ENCODE measurements at regions of chr12 and their contacts with region 1.

Region 1: DNA sequence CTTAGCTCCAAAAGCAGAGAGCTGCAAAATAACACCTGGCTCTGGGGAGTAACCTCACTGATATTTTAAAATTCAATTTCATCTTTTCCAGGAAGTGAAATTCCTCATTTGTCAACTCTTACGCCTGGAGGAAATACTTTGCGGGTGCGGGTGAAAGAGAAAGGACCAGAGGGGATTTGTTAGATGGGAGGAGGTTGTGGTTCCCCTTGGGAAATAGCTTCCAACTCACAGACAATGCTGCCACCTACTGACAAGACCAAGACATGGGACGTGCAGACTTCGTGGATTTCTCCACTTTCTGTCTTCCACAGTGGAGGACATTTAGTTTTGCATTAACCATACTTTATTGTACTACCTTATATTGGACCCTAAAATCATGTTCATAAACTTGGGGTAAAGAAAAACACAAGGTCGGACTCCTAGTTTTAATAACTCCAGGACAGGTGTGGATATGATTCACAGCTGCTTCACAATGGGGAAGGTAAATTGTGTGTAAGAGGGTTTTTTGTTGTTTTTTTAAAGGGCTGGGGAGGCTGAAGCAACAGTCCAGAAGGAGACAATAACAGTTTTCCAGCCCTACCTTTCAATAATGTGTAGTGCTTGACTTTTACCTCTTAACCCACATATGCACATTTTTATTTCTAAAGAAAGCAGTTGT is 10.8 kb downstream of the FBXL14 start:
- DNase-seq: peak in 8 of 9 experiments; percentile 45 to 88 (median 67)
- ATAC-seq: peak; percentile 82
- H3K4me3 ChIP-seq: no peak overlapping the region
- H3K4me3 Mint-ChIP-seq: peak overlapping the region; percentile 20
- H3K27ac ChIP-seq: no peak overlapping the region
- H3K27ac Mint-ChIP-seq: no peak overlapping the region
- H3K4me1 ChIP-seq: peaks cover 20% of the 10 kb centered on the region
- H3K4me1 Mint-ChIP-seq: peaks cover 21% of the 10 kb centered on the region
- H3K27me3 ChIP-seq: no peaks in the 10 kb centered on the region
- H3K27me3 Mint-ChIP-seq: no peaks in the 10 kb centered on the region
- CTCF ChIP-seq: peak; percentile 98

Region 2: DNA sequence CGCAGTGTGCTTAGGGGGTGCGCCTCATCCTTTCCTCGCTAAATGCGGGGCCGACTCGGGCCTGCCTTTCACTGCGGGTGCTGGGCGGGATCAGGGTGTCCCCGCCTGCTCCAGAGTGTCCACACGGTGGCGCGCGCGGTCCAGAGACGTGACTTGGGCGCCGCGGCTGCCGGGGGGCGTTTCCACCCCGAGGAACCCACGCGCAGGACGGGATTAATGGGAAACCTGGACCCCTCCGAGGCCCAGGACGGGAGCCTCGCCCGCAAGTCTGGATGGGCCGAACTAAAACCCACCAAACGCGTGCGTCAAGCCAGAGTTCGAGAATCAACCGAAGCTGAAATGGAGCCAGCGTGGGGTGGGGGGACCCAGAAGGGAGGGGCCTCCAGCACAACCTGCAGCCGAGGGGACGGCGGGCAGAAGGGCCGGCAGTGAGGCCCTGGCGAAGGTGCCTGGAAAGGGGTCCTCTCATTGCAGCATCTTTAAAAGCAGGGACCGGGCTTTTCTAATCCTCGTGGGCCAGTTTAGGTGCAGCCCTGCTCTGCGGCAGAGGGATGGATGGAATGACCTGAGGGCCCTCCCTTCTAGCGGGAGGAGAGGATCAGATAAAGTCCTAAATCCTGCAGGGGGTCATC is 1013.6 kb before region 1 on chr12:
- CTCF ChIA-PET with region 1: no interaction called
- POLR2A ChIA-PET with region 1: no interaction called
- intact Hi-C with region 1: loop called (anchors 5 kb)
- DNase-seq: peak; percentile 74 to 93 (median 87)
- ATAC-seq: peak; percentile 98
- H3K4me3 ChIP-seq: peak overlapping the region; percentile 63 to 76
- H3K4me3 Mint-ChIP-seq: peak overlapping the region; percentile 86
- H3K27ac ChIP-seq: peak overlapping the region in 1 of 2 experiments; percentile 8
- H3K27ac Mint-ChIP-seq: peak overlapping the region; percentile 77
- H3K4me1 ChIP-seq: peaks cover 43% of the 10 kb centered on the region
- H3K4me1 Mint-ChIP-seq: peaks cover 45% of the 10 kb centered on the region
- H3K27me3 ChIP-seq: no peaks in the 10 kb centered on the region
- H3K27me3 Mint-ChIP-seq: no peaks in the 10 kb centered on the region
- CTCF ChIP-seq: peak; percentile 88

Region 3: GRCh38 chr12:575948-576612 is 1007.5 kb before region 1 on chr12:
- CTCF ChIA-PET with region 1: no interaction called
- POLR2A ChIA-PET with region 1: no interaction called
- intact Hi-C with region 1: loop called in 1 of 2 experiments (anchors 5 kb)
- DNase-seq: peak; percentile 73 to 95 (median 81)
- ATAC-seq: peak; percentile 98
- H3K4me3 ChIP-seq: peak overlapping the region; percentile 25 to 34
- H3K4me3 Mint-ChIP-seq: peak overlapping the region; percentile 69
- H3K27ac ChIP-seq: no peak overlapping the region
- H3K27ac Mint-ChIP-seq: peak overlapping the region; percentile 37
- H3K4me1 ChIP-seq: peaks cover 4% of the 10 kb centered on the region
- H3K4me1 Mint-ChIP-seq: peaks cover 14% of the 10 kb centered on the region
- H3K27me3 ChIP-seq: no peaks in the 10 kb centered on the region
- H3K27me3 Mint-ChIP-seq: no peaks in the 10 kb centered on the region
- CTCF ChIP-seq: peak; percentile 98

Region 4: DNA sequence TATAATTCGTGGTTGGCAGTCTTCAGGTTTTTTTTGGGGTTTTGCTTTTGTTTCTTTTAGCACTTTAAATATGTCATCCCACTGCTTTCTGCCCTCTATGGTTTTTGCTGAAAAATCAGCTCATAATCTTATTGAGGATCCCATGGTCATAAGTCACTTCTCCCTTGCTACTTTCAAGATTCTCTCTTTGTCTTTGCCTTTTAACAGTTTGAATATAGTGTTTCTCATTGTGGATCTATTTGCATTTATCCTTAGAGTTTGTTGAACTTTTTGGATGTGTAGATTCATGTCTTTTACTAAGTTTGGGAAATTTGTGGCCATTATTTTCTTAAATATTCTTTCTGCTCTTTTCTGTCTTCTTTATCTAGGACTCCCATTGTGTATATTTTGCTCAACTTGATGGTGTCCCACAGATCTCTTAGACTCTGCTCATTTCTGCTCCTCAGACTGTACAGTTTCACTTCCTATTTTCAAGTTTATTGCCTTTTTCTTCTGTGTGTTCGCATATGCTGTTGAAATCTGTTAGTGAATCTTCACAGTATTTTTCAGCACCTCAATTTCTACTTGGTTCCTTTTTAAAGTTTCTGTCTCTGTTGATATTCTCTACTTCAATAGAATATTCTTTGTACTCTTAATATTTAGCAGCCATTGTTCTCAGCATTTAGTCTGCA is 760.4 kb before region 1 on chr12:
- CTCF ChIA-PET with region 1: no interaction called
- POLR2A ChIA-PET with region 1: no interaction called
- intact Hi-C with region 1: loop called (anchors 5 kb)
- DNase-seq: no peak
- ATAC-seq: no peak
- H3K4me3 ChIP-seq: no peak overlapping the region
- H3K4me3 Mint-ChIP-seq: no peak overlapping the region
- H3K27ac ChIP-seq: no peak overlapping the region
- H3K27ac Mint-ChIP-seq: peak overlapping the region; percentile 1
- H3K4me1 ChIP-seq: no peaks in the 10 kb centered on the region
- H3K4me1 Mint-ChIP-seq: peaks cover 62% of the 10 kb centered on the region
- H3K27me3 ChIP-seq: no peaks in the 10 kb centered on the region
- H3K27me3 Mint-ChIP-seq: no peaks in the 10 kb centered on the region
- CTCF ChIP-seq: no peak

Region 5: GRCh38 chr12:1204581-1205121 is 378.9 kb before region 1 on chr12:
- CTCF ChIA-PET with region 1: interaction called, 5 read pairs
- POLR2A ChIA-PET with region 1: no interaction called
- intact Hi-C with region 1: loop called in 1 of 2 experiments (anchors 10 kb)
- DNase-seq: peak in 2 of 9 experiments; percentile 39 to 59
- ATAC-seq: peak; percentile 95
- H3K4me3 ChIP-seq: peak overlapping the region; percentile 38 to 55
- H3K4me3 Mint-ChIP-seq: no peak overlapping the region
- H3K27ac ChIP-seq: peak overlapping the region; percentile 50 to 65
- H3K27ac Mint-ChIP-seq: no peak overlapping the region
- H3K4me1 ChIP-seq: peaks cover 9% of the 10 kb centered on the region
- H3K4me1 Mint-ChIP-seq: peaks cover 10% of the 10 kb centered on the region
- H3K27me3 ChIP-seq: no peaks in the 10 kb centered on the region
- H3K27me3 Mint-ChIP-seq: no peaks in the 10 kb centered on the region
- CTCF ChIP-seq: no peak

Region 6: DNA sequence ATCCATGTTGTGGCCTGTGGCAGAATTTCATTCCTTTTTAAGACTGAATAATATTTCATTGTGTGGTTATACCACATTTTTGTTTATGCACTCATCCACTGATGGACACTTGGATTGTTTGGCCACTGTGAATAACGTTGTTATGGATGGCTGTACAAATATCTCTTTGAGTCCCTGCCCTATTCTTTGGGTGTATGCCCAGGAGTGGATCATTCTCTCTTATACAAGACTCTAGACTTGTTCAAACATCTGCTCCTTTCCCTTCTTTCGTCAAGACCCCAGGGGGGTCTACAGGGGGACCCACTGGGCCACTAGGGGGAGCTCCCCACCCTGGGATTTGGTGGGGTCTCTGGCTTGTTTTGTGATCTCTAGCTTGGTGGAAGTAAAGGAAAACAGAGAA is 66.5 kb before region 1 on chr12:
- CTCF ChIA-PET with region 1: interaction called, 9 read pairs
- POLR2A ChIA-PET with region 1: no interaction called
- intact Hi-C with region 1: loop called in 1 of 2 experiments (anchors 1 kb)
- DNase-seq: peak in 2 of 9 experiments; percentile 12 to 22
- ATAC-seq: no peak
- H3K4me3 ChIP-seq: no peak overlapping the region
- H3K4me3 Mint-ChIP-seq: no peak overlapping the region
- H3K27ac ChIP-seq: no peak overlapping the region
- H3K27ac Mint-ChIP-seq: no peak overlapping the region
- H3K4me1 ChIP-seq: no peaks in the 10 kb centered on the region
- H3K4me1 Mint-ChIP-seq: no peaks in the 10 kb centered on the region
- H3K27me3 ChIP-seq: peaks cover 0 to 7% of the 10 kb centered on the region in 2 experiments
- H3K27me3 Mint-ChIP-seq: peaks cover 14% of the 10 kb centered on the region
- CTCF ChIP-seq: no peak

Region 7: DNA sequence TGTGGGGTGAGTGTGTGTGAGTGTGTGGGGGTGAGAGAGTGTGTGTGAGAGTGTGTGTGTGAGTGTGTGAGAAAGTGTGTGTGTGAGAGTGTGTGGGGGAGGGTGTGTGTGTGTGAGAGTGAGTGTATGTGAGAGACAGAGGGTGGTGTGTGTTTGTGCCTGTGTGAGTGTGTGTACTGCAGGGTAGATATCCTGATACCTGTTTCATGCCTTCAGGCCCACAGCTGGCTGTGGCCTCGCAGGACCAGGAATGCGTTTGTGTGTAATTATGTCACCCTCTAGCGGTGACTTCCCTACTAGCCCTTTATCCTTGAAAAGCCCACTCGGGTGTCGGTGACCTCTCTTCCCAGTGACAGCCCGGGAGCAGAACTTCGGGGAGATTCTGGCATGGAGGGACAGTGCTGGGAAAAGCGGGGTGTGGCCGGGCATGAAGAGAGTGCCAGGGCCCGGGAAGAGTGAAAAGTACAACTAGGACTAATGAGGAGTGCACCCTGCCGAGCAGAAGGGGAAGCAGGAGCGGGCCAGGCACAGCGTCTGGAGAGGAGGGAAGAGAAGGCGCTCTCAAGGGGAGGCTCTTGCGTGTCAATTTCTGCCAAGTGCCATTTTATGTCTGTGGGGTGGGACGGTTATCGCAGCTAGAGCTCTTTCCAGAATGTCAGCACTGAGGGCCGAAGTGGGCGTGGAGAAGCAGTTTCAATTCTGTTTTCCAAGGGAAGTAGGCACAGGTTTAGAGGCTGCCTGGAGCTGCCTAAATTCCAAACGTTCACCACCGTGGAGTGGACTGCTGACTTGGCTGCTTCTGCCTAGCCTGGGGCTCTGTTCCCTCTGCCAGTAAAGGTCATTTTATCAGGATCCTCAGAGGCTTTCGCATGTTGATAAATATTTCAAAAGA is 21.8 kb after region 1 on chr12:
- CTCF ChIA-PET with region 1: interaction called, 31 read pairs
- POLR2A ChIA-PET with region 1: interaction called, 3 read pairs
- intact Hi-C with region 1: loop called (anchors 1 to 2 kb)
- DNase-seq: peak in 8 of 9 experiments; percentile 32 to 86 (median 64)
- ATAC-seq: peak; percentile 70
- H3K4me3 ChIP-seq: peak overlapping the region; percentile 36 to 37
- H3K4me3 Mint-ChIP-seq: peak overlapping the region; percentile 86
- H3K27ac ChIP-seq: no peak overlapping the region
- H3K27ac Mint-ChIP-seq: peak overlapping the region; percentile 24
- H3K4me1 ChIP-seq: peaks cover 23% of the 10 kb centered on the region
- H3K4me1 Mint-ChIP-seq: peaks cover 31% of the 10 kb centered on the region
- H3K27me3 ChIP-seq: no peaks in the 10 kb centered on the region
- H3K27me3 Mint-ChIP-seq: no peaks in the 10 kb centered on the region
- CTCF ChIP-seq: peak; percentile 64

Region 8: DNA sequence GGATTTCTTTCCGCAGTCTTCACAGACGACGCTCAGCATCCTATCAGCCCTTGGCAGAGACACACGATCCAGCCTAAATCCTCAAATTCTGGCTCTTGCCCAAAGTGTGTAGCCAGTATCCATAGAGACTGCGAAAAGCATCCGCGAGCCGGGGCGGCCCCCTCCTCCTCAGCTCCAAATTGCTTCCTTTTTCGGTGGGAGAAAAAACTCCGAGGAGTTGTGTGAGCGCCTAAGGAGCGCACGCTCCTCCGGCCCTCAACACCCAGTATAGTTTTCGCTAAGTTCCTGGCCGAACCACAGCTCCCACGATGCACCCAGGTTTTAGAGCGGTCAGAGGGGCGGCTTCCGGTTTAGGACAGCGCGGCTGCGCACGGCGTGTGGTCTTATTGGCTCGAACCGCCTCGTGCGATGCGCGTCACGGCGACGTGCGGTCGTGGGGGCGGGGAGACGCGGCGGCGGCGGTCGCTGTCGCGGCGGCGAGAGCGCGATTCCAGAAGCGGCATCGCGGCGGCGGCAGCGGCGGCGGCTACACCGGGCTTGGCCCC is 107.1 kb after region 1 on chr12 and contains the start of gene ADIPOR2:
- CTCF ChIA-PET with region 1: no interaction called
- POLR2A ChIA-PET with region 1: no interaction called
- intact Hi-C with region 1: no loop called
- DNase-seq: peak; percentile 88 to 98 (median 94)
- ATAC-seq: peak; percentile 97
- H3K4me3 ChIP-seq: peak within 1 kb of the TSS; percentile 84 to 91
- H3K4me3 Mint-ChIP-seq: peak within 1 kb of the TSS; percentile 92
- H3K27ac ChIP-seq: peak within 1 kb of the TSS; percentile 73 to 94
- H3K27ac Mint-ChIP-seq: peak within 1 kb of the TSS; percentile 99
- H3K4me1 ChIP-seq: peaks cover 20% of the 10 kb centered on the region
- H3K4me1 Mint-ChIP-seq: peaks cover 46% of the 10 kb centered on the region
- H3K27me3 ChIP-seq: no peaks in the 10 kb centered on the region
- H3K27me3 Mint-ChIP-seq: no peaks in the 10 kb centered on the region
- CTCF ChIP-seq: no peak
- total RNA-seq, gene ADIPOR2: 19.4 to 22.5 TPM

Region 9: DNA sequence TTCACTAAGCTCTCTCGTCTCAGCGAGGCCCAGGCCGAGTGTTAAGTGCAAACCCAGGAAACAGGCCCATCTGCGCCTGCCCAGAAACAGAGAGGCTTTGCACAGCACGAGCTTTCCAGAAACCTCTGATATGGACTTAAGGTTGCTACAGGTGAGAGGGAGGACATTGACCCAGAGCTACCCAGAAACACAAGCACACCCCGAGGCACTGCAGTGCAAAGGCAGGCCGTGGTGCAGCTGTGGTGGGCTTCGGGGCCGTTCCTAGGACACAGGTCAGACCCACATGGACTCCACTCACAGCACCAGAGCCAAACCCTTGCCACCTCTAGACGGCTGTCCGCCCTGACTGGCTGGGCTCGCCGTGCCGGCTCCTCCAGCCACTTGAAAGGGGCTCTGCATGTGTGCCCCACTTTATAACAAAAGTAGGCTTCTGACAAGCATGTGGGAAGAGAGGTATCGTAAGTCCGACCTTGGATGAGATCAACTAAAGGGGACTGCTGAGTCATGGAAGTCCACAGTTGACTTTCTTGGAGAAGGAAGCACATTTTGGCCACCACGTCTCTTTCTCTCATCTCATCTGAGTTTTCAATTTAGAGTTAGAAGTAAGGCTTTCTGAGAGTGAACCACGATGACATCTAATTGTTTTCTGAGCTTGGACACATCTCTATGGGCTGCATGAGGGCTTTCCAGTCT is 296.7 kb after region 1 on chr12:
- CTCF ChIA-PET with region 1: no interaction called
- POLR2A ChIA-PET with region 1: no interaction called
- intact Hi-C with region 1: no loop called
- DNase-seq: no peak
- ATAC-seq: no peak
- H3K4me3 ChIP-seq: no peak overlapping the region
- H3K4me3 Mint-ChIP-seq: no peak overlapping the region
- H3K27ac ChIP-seq: no peak overlapping the region
- H3K27ac Mint-ChIP-seq: no peak overlapping the region
- H3K4me1 ChIP-seq: no peaks in the 10 kb centered on the region
- H3K4me1 Mint-ChIP-seq: no peaks in the 10 kb centered on the region
- H3K27me3 ChIP-seq: no peaks in the 10 kb centered on the region
- H3K27me3 Mint-ChIP-seq: peaks cover 6% of the 10 kb centered on the region
- CTCF ChIP-seq: no peak